CD8-positive, alpha-beta T cell (primary cell): ENCODE measurements at regions of chr17 and their contacts with region 1.

Region 1: DNA sequence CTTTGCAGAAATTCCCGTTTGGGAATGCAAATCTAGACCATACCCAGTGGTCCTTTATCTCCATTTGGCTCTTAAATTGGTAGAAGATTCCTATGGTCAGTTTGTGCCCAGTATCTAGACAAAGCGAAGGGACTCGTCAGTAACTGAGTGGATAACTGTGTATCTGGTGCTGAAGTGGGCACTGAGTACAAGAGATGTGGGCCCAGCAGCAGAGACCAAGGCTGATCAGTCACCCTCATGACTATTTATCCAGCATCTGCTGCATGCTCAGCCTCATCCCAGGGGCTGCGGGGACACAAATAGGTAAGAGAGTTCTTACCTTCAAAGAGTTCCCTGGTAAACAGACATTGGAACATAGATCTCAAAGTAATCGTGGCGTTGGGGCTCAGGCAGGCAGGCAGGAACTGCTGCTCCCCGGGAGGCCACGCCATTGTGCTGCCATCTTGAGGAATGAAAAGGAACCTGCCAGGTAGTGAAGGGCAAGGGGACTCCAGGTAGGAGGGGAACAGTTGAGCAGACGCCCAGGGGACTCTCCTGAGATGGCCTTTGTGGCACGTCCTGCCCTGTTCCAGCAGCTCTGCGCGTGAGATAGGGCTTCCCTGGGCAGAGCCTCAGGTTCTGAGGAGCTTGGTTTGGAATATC is 10.3 kb downstream of the NT5M start:
- DNase-seq: peak; percentile 45 to 85 (median 75)
- ATAC-seq: peak; percentile 100
- H3K4me3 ChIP-seq: no peak overlapping the region
- H3K4me3 Mint-ChIP-seq: no peak overlapping the region
- H3K27ac ChIP-seq: no peak overlapping the region
- H3K27ac Mint-ChIP-seq: no peak overlapping the region
- H3K4me1 ChIP-seq: peaks cover 4% of the 10 kb centered on the region
- H3K4me1 Mint-ChIP-seq: peaks cover 5% of the 10 kb centered on the region
- H3K27me3 ChIP-seq: no peaks in the 10 kb centered on the region
- H3K27me3 Mint-ChIP-seq: no peaks in the 10 kb centered on the region
- CTCF ChIP-seq: peak; percentile 81

Region 2: GRCh38 chr17:16900288-16900882 is 413.1 kb before region 1 on chr17:
- CTCF ChIA-PET with region 1: no interaction called
- POLR2A ChIA-PET with region 1: no interaction called
- intact Hi-C with region 1: no loop called
- DNase-seq: peak in 1 of 9 experiments; percentile 23
- ATAC-seq: no peak
- H3K4me3 ChIP-seq: no peak overlapping the region
- H3K4me3 Mint-ChIP-seq: no peak overlapping the region
- H3K27ac ChIP-seq: no peak overlapping the region
- H3K27ac Mint-ChIP-seq: no peak overlapping the region
- H3K4me1 ChIP-seq: no peaks in the 10 kb centered on the region
- H3K4me1 Mint-ChIP-seq: no peaks in the 10 kb centered on the region
- H3K27me3 ChIP-seq: no peaks in the 10 kb centered on the region
- H3K27me3 Mint-ChIP-seq: peaks cover 33% of the 10 kb centered on the region
- CTCF ChIP-seq: no peak

Region 3: DNA sequence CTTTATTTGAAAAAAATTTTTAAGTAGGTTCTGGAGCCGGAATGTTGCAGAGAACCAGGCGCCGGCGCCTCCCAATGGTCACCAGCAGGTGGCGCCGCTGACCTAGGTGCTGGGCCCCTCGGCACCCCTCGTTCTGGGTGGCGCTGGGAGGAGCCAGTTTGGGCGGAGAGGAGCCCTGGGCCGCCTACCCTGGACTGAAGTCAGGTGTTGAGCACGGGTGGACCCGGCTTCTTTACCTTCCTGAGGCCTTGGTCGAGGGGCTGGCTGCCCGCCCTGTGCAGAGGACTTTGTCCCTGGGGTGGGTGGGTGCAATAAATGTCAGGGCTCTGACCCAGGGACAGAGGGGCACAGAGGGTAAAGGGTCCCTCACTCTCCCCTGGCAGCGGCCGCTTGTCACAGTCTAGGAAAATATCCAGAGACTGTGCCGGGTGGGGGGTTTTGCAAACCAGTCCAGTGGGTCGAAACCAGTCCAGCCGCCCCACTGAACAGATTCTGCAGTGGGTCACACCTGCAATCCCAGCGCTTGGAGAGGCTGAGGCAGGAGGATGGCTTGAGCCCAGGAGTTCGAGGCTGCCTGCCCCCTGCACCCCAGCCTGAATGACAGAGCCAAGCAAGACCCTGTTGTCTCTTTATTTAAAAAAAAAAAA is 311.5 kb before region 1 on chr17:
- CTCF ChIA-PET with region 1: interaction called, 22 read pairs
- POLR2A ChIA-PET with region 1: interaction called, 3 read pairs
- intact Hi-C with region 1: loop called in 1 of 2 experiments (anchors 1 kb)
- DNase-seq: peak; percentile 58 to 86 (median 77)
- ATAC-seq: peak; percentile 98
- H3K4me3 ChIP-seq: no peak overlapping the region
- H3K4me3 Mint-ChIP-seq: no peak overlapping the region
- H3K27ac ChIP-seq: no peak overlapping the region
- H3K27ac Mint-ChIP-seq: no peak overlapping the region
- H3K4me1 ChIP-seq: no peaks in the 10 kb centered on the region
- H3K4me1 Mint-ChIP-seq: peaks cover 1% of the 10 kb centered on the region
- H3K27me3 ChIP-seq: no peaks in the 10 kb centered on the region
- H3K27me3 Mint-ChIP-seq: no peaks in the 10 kb centered on the region
- CTCF ChIP-seq: peak; percentile 89

Region 4: GRCh38 chr17:17269926-17270773 is 43.3 kb before region 1 on chr17:
- CTCF ChIA-PET with region 1: interaction called, 6 read pairs
- POLR2A ChIA-PET with region 1: no interaction called
- intact Hi-C with region 1: loop called in 1 of 2 experiments (anchors 1 kb)
- DNase-seq: peak in 4 of 9 experiments; percentile 17 to 40 (median 33)
- ATAC-seq: no peak
- H3K4me3 ChIP-seq: no peak overlapping the region
- H3K4me3 Mint-ChIP-seq: no peak overlapping the region
- H3K27ac ChIP-seq: no peak overlapping the region
- H3K27ac Mint-ChIP-seq: no peak overlapping the region
- H3K4me1 ChIP-seq: no peaks in the 10 kb centered on the region
- H3K4me1 Mint-ChIP-seq: peaks cover 2% of the 10 kb centered on the region
- H3K27me3 ChIP-seq: no peaks in the 10 kb centered on the region
- H3K27me3 Mint-ChIP-seq: no peaks in the 10 kb centered on the region
- CTCF ChIP-seq: peak; percentile 29

Region 5: DNA sequence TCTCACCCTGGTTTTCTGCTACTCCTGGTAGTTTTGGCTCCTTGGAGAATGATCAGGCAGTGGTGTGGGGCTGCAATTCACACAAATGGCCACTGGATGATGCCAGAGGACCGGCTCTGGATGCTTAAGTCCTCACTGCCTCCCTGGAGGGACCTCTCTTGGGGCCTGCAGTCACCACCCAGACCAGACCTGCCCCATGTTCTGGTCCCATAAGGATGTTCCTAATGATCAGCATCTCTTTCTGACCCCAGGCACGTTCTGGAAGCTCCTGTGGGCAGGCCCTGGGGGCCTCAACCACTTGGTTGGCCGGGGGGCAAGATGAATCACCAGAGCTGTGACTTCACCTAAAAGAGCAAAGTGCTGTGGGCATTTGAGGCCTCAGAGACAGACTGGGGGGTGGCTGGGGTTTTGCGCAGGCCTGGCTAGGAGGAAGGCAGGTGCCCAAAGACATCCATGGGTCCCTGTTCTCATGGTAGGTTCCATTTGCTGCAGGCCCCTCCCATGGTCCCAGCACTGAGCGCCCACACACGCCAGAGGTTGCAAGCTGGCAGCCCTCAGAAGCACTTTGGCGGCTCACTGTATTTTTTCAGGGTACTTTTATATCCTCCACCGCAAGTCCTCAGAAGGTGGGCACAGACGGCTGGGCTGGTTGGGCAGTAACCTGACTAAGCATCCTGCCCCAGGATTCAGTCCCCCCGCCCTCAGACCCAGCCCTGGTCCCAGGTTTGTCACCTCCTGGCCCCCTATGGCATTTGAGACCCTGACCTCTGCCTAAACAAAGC is 42.9 kb after region 1 on chr17:
- CTCF ChIA-PET with region 1: no interaction called
- POLR2A ChIA-PET with region 1: no interaction called
- intact Hi-C with region 1: no loop called
- DNase-seq: peak; percentile 41 to 83 (median 68)
- ATAC-seq: peak; percentile 89
- H3K4me3 ChIP-seq: no peak overlapping the region
- H3K4me3 Mint-ChIP-seq: no peak overlapping the region
- H3K27ac ChIP-seq: no peak overlapping the region
- H3K27ac Mint-ChIP-seq: no peak overlapping the region
- H3K4me1 ChIP-seq: no peaks in the 10 kb centered on the region
- H3K4me1 Mint-ChIP-seq: peaks cover 4% of the 10 kb centered on the region
- H3K27me3 ChIP-seq: no peaks in the 10 kb centered on the region
- H3K27me3 Mint-ChIP-seq: no peaks in the 10 kb centered on the region
- CTCF ChIP-seq: peak; percentile 99